Prostate gland (tissue), 2 donors: ENCODE measurements at regions of chr12 and their contacts with region 1.

Region 1: GRCh38 chr12:666766-667308 is 3.6 kb upstream of the NINJ2 start:
- DNase-seq: no peak
- H3K4me3 ChIP-seq: no peak overlapping the region
- H3K27ac ChIP-seq: no peak overlapping the region
- H3K4me1 ChIP-seq: peaks cover 4% of the 10 kb centered on the region
- H3K27me3 ChIP-seq: no peaks in the 10 kb centered on the region
- CTCF ChIP-seq: no peak
- POLR2A ChIP-seq: no peak

Region 2: DNA sequence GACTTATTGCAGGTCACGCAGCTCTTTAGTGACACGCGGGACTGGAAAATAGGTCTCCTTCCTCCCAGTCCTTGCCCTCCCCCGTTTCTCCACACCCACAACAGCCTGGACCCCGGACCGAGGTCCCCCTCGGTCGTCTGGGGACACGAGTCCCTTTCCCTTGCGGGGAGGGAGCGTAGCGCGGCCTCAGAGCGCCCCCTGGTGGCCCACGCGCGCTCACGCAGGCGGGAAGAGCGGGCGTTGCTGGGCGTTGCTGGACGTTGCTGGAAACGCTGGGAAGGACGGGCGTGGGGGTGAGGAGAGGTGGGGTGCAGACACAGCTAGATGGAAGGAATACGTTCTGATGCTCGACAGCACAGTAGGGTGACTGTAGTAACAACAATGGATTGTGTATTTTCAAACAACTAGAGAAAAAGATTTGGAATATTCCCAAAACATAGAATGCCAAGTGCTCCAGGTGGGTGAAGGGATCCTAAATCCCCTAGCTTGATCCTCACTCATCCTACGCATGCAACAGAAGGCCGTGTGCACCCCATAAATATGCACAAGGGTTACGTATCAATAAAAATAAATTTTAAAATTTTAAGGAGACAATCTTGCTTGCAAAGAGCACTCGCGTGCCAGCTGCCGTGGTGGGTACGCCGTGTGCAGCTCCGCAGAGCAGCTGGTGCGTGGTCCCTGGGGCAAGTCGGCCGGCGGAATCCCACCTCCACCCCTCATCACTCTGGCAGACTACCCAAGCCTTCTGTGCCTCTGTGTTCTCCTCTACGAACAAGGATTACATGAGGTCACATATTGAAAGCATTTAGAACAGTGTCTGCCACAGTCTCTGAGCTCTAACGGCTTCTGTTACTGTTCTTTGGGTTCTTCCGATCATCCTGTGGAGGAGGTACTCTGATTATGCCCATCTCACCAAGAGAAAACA is 119.7 kb before region 1 on chr12:
- intact Hi-C with region 1: no loop called
- DNase-seq: no peak
- H3K4me3 ChIP-seq: no peak overlapping the region
- H3K27ac ChIP-seq: no peak overlapping the region
- H3K4me1 ChIP-seq: no peaks in the 10 kb centered on the region
- H3K27me3 ChIP-seq: no peaks in the 10 kb centered on the region
- CTCF ChIP-seq: peak; percentile 92 to 100 (median 99)
- POLR2A ChIP-seq: no peak

Region 3: GRCh38 chr12:724194-724855 is 57.5 kb after region 1 on chr12:
- intact Hi-C with region 1: loop called (anchors 5 kb)
- DNase-seq: no peak
- H3K4me3 ChIP-seq: no peak overlapping the region
- H3K27ac ChIP-seq: no peak overlapping the region
- H3K4me1 ChIP-seq: peaks cover under 1% of the 10 kb centered on the region
- H3K27me3 ChIP-seq: no peaks in the 10 kb centered on the region
- CTCF ChIP-seq: no peak
- POLR2A ChIP-seq: no peak